Psoas muscle (tissue), 8 donors: ENCODE measurements at regions of chr13 and their contacts with region 1.

Region 1: DNA sequence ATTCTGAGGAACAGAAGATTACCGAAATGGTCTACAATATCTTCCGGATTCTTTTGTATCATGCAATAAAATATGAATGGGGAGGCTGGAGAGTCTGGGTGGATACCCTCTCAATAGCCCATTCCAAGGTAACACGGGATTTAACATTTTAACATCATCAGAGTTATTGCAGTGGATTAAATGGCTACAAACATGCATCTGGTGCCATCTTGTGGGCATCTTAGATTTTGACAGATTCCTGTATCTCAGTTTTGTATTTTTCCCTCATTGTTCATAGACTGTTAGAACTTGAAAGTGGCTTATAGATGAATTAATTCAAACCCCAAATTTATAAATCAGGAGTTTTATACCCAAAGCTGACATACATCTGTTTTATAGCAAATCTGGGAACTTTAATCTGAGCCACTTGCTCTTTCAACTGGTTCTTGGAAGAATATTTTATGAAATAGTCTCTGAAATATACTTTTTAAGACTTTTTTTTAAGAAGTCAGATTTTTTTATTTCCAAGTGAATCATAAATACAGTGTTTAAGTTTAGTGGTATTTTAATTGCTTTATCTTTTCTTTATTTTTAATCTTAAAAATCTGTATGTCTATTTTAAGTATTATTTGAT is 215.2 kb downstream of the NBEA start:
- DNase-seq: no peak
- ATAC-seq: peak in 1 of 4 donors; percentile 65
- H3K4me3 ChIP-seq: no peak overlapping the region
- H3K27ac ChIP-seq: no peak overlapping the region
- H3K4me1 ChIP-seq: no peaks in the 10 kb centered on the region
- H3K27me3 ChIP-seq: no peaks in the 10 kb centered on the region
- CTCF ChIP-seq: peak; percentile 68

Region 2: DNA sequence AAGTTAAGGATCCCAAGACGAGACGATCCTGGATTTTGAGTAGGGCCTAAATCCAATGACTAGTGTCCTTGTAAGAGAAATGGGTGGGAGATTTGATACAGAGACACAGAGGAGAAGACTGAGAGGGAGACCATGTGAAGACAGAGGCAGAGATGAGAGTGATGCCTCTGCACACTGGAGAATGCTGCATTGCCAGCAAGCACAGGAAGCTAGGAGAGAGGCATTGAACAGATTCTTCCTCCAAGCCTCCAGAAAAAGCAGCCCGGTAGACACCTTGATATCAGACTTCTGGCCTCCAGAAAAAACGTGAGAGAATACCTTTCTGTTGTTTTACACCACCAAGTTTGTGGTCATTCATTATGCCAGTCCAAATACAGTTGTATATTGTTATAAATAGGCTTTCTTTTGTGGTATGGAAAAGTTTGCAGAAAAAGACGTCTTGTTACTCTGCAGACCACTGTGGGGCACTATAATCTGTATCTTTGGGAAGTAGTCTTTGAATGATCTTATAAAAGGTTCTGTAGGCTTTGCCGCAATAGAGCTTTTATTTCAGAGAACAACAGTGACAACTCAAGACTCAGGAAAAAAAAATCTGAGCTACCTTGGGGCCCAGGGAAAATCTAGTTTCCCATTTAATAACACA is 1357.2 kb before region 1 on chr13:
- intact Hi-C with region 1: loop called in 1 of 2 experiments (anchors 10 kb)
- DNase-seq: no peak
- ATAC-seq: peak in 2 of 4 donors; percentile 41 to 54
- H3K4me3 ChIP-seq: peak overlapping the region; percentile 16
- H3K27ac ChIP-seq: no peak overlapping the region
- H3K4me1 ChIP-seq: peaks cover 8% of the 10 kb centered on the region
- H3K27me3 ChIP-seq: no peaks in the 10 kb centered on the region
- CTCF ChIP-seq: peak; percentile 42

Region 3: DNA sequence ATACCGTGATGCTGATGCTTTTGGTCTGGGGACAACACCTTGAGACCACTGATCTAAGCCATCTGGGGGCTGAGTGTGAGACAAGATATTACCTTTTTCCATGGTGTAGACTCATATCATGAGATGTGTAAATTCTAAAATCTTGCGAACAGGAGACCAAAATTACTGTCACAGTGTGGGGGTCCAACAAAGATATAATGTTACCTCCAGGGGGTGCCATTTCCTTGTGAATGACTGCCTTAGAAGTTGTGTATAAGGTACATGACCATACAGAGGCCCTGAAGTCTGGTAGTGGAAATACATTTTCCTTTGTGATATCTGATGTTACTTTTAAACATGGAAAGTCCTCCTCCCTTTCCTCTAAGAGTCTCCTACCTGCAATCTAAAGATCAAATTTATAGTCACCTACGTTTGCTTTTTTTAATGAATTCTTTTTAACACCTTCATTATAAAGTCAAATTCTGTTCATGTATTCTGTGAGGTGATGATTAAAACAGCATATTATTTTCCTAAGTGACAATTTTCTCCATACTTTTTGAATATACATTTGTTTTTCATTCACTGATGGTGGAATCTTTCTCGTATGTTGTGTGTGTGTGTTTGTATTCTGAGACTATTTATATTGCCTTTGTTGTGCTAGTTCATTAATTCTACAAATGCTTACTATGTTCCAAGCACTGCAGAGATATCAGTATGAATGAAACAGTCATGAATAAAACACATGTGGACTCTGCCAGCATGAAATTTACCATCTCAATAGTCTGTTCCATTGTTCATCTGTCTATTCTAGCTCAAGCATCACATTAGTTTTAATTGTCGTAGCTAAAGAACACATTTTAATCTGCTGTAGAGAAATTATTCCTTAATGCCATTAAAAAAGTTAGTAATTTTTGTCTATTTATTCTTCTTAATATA is 1225.6 kb before region 1 on chr13:
- intact Hi-C with region 1: loop called (anchors 5 kb)
- DNase-seq: no peak
- ATAC-seq: peak in 1 of 4 donors; percentile 28
- H3K4me3 ChIP-seq: no peak overlapping the region
- H3K27ac ChIP-seq: no peak overlapping the region
- H3K4me1 ChIP-seq: no peaks in the 10 kb centered on the region
- H3K27me3 ChIP-seq: no peaks in the 10 kb centered on the region
- CTCF ChIP-seq: peak; percentile 24

Region 4: GRCh38 chr13:34913040-34913439 is 244.2 kb before region 1 on chr13:
- intact Hi-C with region 1: no loop called
- DNase-seq: no peak
- ATAC-seq: no peak
- H3K4me3 ChIP-seq: no peak overlapping the region
- H3K27ac ChIP-seq: no peak overlapping the region
- H3K4me1 ChIP-seq: no peaks in the 10 kb centered on the region
- H3K27me3 ChIP-seq: peaks cover 3 to 15% (median 3%) of the 10 kb centered on the region in 3 donors
- CTCF ChIP-seq: no peak

Region 5: GRCh38 chr13:34941835-34942731 is 215.2 kb before region 1 on chr13 and contains the start of gene NBEA:
- intact Hi-C with region 1: loop called in 1 of 2 experiments (anchors 10 kb)
- DNase-seq: peak; percentile 69 to 85
- ATAC-seq: peak; percentile 81 to 92 (median 88)
- H3K4me3 ChIP-seq: peak within 1 kb of the TSS; percentile 90
- H3K27ac ChIP-seq: peak within 1 kb of the TSS; percentile 77
- H3K4me1 ChIP-seq: peaks cover 17% of the 10 kb centered on the region
- H3K27me3 ChIP-seq: no peaks in the 10 kb centered on the region
- CTCF ChIP-seq: peak; percentile 40
- total RNA-seq, gene NBEA: 1.2 to 5.3 (median 4.7) TPM